Right ventricle myocardium superior (tissue), 1 donor: ENCODE measurements at regions of chr1 and their contacts with region 1.

Region 1: DNA sequence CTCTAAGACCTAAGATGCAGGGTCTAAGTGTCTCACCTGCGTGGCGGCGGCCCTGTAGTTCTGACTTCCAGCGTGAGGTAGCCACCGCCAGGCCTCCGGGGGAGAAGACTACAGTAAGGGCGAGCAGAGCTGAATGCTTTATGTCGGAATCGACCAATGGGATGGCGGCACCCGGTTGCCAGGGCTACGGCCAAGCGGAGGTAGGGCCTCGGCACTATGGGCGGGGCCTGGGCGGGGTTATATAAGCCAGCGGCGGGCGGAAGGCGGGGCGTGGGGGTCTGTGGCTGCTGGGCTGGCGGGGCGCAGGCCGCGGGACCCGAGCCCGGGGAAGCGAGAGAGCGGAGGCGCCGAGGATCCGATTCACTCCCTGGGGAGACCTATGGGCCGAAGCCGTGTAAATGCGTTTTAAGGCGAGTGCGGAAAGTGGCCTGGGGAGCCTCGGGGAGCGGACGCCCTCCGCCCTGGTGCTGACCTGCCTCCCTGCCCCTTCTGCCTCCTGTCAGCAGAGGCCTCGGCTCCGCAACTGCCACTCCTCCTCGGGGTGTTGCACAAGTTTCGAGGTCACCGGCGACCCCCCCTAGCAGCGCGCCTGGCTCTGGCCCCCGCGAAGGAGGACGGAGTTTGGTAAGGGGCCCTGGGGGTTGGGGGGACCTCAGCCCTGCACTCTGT is at the start of gene AZIN2:
- DNase-seq: peak; percentile 99
- ATAC-seq: peak; percentile 99
- total RNA-seq, gene AZIN2: 1.9 TPM

Region 2: DNA sequence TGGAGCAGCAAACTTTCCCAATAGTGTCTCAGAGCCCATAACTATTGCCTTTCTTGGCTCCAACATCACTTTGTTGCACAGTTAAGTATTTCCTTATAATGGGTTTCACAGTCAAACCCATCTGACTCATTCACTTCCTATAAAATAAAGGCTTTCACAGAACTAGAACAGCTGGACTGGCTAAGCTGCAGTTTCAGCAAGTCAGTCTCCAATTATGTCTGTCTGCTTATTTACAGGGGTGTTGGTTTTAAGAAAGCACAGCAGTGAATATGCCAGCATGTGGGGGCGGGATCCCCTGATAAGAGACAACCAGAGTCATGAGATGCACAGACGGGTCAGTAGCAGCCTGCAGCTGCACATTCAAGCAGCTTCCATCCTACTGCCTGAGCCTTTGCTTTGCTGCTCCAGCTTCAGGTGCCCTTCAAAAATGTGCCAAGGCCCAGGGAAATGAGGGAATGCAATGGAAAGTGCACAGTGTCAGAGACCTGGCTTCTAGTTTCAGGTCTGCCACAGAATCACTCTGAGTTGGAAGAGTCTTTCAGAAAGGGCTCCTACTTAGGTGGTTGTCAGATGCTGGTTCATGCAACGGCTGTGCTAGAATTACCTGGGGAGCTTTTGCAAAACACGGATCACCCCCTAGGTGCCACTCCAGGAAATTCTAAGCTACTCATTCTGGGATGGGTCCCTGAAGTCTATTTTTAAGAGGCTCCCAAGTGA is 141.2 kb before region 1 on chr1:
- intact Hi-C with region 1: loop called (anchors 10 kb)
- DNase-seq: peak; percentile 62
- ATAC-seq: peak; percentile 73